ENCODE measurements at regions of chr5 and their contacts with region 1.

Region 1: DNA sequence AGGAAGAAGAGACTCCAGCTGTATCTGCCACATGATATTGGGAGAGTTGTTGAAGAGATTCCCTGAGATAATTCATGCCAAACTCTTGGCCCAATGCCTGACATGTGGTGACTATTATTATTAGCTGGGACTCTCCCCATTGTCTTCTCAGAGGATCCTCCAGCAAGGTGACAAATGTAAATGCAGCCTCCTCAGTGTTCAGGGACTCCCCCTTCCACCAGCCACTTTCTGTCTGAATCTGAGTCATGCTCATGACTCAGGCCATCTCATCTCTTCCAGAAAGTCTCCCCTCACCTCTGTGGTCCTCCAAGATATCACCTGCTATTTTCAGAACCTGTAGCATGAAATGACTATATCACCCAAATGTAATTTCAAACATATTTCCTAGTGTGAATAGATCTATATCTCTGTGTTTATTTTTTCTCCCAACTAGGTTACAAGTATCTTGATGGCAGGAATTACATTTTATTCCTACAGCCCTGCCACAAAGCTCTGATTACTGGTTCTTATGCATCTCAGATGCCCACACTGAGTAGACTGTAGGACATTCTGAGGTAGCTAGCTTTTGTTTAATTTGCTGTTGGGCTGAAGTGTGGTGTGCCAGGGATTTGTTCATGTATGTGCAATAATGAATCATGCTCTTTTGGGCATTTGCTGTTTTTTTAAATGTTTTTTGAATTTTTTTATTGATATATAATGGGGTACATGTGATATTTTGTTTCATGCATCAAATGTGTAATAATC is 126.6 kb upstream of the IL12B start:
- DNase-seq: peak; percentile 36
- H3K4me3 Mint-ChIP-seq: no peak overlapping the region
- H3K27ac Mint-ChIP-seq: peak overlapping the region; percentile 1
- H3K4me1 Mint-ChIP-seq: peaks cover 41% of the 10 kb centered on the region
- H3K27me3 Mint-ChIP-seq: peaks cover 60% of the 10 kb centered on the region

Region 2: GRCh38 chr5:158819840-158820620 is 636.9 kb before region 1 on chr5:
- intact Hi-C with region 1: loop called (anchors 1 kb)
- DNase-seq: no peak
- H3K4me3 Mint-ChIP-seq: no peak overlapping the region
- H3K27ac Mint-ChIP-seq: peak overlapping the region; percentile 18
- H3K4me1 Mint-ChIP-seq: peaks cover 39% of the 10 kb centered on the region
- H3K27me3 Mint-ChIP-seq: no peaks in the 10 kb centered on the region

Region 3: GRCh38 chr5:159178978-159179377 is 277.9 kb before region 1 on chr5:
- intact Hi-C with region 1: loop called (anchors 5 kb)
- DNase-seq: no peak
- H3K4me3 Mint-ChIP-seq: peak overlapping the region; percentile 30
- H3K27ac Mint-ChIP-seq: peak overlapping the region; percentile 85
- H3K4me1 Mint-ChIP-seq: peaks cover 74% of the 10 kb centered on the region
- H3K27me3 Mint-ChIP-seq: no peaks in the 10 kb centered on the region

Region 4: DNA sequence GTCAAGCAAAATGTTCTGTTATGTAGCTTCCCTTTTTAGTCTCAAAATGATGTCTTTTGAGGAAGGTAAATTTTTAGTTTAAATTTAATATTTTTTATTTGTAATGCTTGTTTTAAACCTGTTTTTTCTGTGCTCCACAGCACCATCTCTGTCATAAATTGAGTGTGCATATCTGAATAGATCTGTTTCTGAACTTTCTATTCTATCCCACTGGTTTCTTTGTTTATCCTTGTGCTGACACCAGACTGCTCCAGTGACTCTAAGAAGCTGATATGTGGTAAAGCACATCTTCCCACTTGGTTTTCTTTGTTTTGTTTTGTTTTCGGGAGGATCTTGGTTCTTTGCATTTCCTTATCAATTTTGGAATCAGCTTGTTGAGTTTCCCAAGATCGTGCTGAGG is 240.4 kb before region 1 on chr5:
- intact Hi-C with region 1: loop called (anchors 1 kb)
- DNase-seq: no peak
- H3K4me3 Mint-ChIP-seq: no peak overlapping the region
- H3K27ac Mint-ChIP-seq: peak overlapping the region; percentile 57
- H3K4me1 Mint-ChIP-seq: peaks cover 24% of the 10 kb centered on the region
- H3K27me3 Mint-ChIP-seq: peaks cover 13% of the 10 kb centered on the region

Region 5: DNA sequence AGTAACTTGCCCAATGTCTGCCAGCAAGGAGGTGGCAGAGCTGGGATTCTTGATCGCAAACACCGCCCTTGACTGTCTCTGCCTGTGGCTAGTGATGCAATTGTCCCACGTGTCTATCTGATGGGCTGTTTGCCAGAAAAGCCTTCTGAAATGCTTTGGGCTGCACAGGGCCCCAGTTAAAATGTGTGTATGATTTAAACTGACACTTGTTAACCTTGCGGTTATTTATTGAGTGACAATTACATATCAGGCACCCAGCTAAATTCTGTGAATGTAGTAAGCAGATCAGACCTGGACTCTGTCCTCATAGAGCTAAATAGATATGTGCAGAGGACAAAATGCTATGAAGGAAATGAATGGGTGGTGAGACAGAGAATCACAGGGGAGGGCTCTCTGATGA is 115.0 kb before region 1 on chr5:
- intact Hi-C with region 1: loop called (anchors 1 kb)
- DNase-seq: peak; percentile 28
- H3K4me3 Mint-ChIP-seq: no peak overlapping the region
- H3K27ac Mint-ChIP-seq: no peak overlapping the region
- H3K4me1 Mint-ChIP-seq: peaks cover 50% of the 10 kb centered on the region
- H3K27me3 Mint-ChIP-seq: peaks cover 14% of the 10 kb centered on the region

Region 6: DNA sequence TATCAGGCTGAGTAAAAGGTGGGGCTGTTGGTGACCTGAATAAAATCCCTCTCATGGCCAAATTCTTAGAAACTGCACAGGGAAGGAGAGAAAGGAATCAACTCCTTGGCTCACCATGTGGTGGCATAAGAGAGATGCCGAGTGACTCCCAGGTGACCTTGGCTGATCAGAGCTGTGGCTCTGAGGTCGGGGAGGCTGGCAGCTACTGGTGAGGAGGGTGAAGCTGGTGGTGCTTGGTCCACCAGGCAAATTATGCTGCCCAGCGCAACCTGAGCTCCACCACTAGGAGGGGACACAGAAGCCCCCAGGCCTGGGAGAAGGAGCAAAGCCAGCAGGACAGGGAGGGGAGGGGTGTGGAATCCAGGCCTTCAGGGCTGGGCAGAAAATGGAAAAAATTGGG is 15.5 kb before region 1 on chr5:
- intact Hi-C with region 1: no loop called
- DNase-seq: no peak
- H3K4me3 Mint-ChIP-seq: no peak overlapping the region
- H3K27ac Mint-ChIP-seq: no peak overlapping the region
- H3K4me1 Mint-ChIP-seq: no peaks in the 10 kb centered on the region
- H3K27me3 Mint-ChIP-seq: peaks cover 58% of the 10 kb centered on the region

Region 7: GRCh38 chr5:159773062-159773924 is 316.4 kb after region 1 on chr5:
- intact Hi-C with region 1: loop called (anchors 2 kb)
- DNase-seq: peak; percentile 79
- H3K4me3 Mint-ChIP-seq: peak overlapping the region; percentile 26
- H3K27ac Mint-ChIP-seq: peak overlapping the region; percentile 42
- H3K4me1 Mint-ChIP-seq: peaks cover 38% of the 10 kb centered on the region
- H3K27me3 Mint-ChIP-seq: peaks cover 13% of the 10 kb centered on the region

Measured in activated T-helper 2 cell treated with anti-CD3 and anti-CD28 coated beads, Interferon-gamma antibody, Interleukin-2, Interleukin-4, amounts not matched to agents 10 μg/mL and 5 μg/mL and 100 μg/mL, durations not matched to agents 14 hours and 24 hours and 36 hours (primary cell).